Activated B cell treated with CpG ODN at 0.5 μM for 24 hours (primary cell): ENCODE measurements at regions of chr17 and their contacts with region 1.

Region 1: GRCh38 chr17:3802461-3803307 is 1.7 kb upstream of the ITGAE start:
- DNase-seq: no peak
- ATAC-seq: no peak
- H3K4me3 Mint-ChIP-seq: no peak overlapping the region
- H3K27ac Mint-ChIP-seq: peak overlapping the region; percentile 57
- H3K4me1 Mint-ChIP-seq: peaks cover 54% of the 10 kb centered on the region
- H3K27me3 Mint-ChIP-seq: no peaks in the 10 kb centered on the region
- CTCF ChIP-seq: no peak

Region 2: GRCh38 chr17:3773511-3773910 is 29.2 kb before region 1 on chr17:
- CTCF ChIA-PET with region 1: no interaction called
- POLR2A ChIA-PET with region 1: interaction called, 14 read pairs
- intact Hi-C with region 1: no loop called
- DNase-seq: no peak
- ATAC-seq: no peak
- H3K4me3 Mint-ChIP-seq: no peak overlapping the region
- H3K27ac Mint-ChIP-seq: no peak overlapping the region
- H3K4me1 Mint-ChIP-seq: peaks cover 17% of the 10 kb centered on the region
- H3K27me3 Mint-ChIP-seq: no peaks in the 10 kb centered on the region
- CTCF ChIP-seq: no peak

Region 3: DNA sequence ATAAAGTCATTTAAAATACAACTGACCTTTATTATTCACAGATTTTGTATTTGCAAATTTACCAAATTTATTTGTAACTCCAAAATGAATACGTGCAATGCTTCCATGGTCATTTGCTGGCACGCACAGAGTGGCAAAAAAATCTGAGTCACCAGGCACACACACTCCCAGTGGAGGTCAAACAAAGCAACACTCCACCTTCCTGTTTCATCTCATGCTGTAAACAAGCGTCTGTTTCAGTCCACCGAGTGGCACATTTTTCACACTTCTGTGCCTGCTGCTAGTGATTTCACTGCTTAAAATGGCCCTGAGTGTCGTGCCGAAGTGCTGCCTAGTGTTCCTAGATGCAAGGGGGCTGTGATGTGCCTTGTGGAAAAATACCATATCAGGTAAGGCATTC is 16.1 kb after region 1 on chr17:
- CTCF ChIA-PET with region 1: no interaction called
- POLR2A ChIA-PET with region 1: interaction called, 5 read pairs
- intact Hi-C with region 1: loop called (anchors 2 kb)
- DNase-seq: no peak
- ATAC-seq: peak; percentile 65
- H3K4me3 Mint-ChIP-seq: no peak overlapping the region
- H3K27ac Mint-ChIP-seq: peak overlapping the region; percentile 65
- H3K4me1 Mint-ChIP-seq: peaks cover 29% of the 10 kb centered on the region
- H3K27me3 Mint-ChIP-seq: no peaks in the 10 kb centered on the region
- CTCF ChIP-seq: no peak

Region 4: DNA sequence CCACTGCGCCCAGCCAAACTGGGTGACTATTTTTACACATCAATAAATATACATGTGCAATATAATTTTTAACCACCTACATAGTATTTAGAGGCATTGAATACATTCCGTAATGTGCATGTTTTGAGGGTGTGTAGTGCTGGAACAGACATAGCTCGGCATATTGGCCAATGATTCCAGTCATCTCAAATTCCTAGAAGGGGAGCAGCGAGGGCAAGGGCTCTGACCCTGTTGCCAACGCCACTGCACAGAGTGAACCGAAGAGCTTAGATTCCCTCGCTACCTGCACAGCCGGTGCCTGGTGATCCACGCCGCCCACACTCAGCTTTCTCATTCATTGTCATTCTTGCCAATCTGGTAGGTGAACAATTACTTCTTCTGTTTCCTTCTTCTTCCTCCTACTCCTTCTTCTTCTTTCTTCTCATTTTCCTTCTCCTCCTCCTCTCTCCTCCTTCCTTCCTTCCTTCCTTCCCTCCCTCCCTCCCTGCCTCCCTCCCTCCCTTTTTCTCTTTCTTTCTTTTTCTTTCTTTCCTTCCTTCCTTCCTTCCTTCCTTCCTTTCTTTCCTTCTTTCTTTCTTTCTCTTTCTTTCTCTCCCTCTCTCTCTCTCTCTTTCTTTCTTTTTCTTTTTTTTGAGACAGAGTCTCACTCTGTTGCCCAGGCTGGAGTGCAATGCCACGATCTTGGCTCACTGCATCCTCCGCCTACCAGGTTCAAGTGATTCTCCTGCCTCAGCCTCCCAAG is 187.9 kb after region 1 on chr17:
- CTCF ChIA-PET with region 1: no interaction called
- POLR2A ChIA-PET with region 1: no interaction called
- intact Hi-C with region 1: no loop called
- DNase-seq: no peak
- ATAC-seq: no peak
- H3K4me3 Mint-ChIP-seq: no peak overlapping the region
- H3K27ac Mint-ChIP-seq: no peak overlapping the region
- H3K4me1 Mint-ChIP-seq: peaks cover 7% of the 10 kb centered on the region
- H3K27me3 Mint-ChIP-seq: peaks cover 5% of the 10 kb centered on the region
- CTCF ChIP-seq: no peak

Region 5: DNA sequence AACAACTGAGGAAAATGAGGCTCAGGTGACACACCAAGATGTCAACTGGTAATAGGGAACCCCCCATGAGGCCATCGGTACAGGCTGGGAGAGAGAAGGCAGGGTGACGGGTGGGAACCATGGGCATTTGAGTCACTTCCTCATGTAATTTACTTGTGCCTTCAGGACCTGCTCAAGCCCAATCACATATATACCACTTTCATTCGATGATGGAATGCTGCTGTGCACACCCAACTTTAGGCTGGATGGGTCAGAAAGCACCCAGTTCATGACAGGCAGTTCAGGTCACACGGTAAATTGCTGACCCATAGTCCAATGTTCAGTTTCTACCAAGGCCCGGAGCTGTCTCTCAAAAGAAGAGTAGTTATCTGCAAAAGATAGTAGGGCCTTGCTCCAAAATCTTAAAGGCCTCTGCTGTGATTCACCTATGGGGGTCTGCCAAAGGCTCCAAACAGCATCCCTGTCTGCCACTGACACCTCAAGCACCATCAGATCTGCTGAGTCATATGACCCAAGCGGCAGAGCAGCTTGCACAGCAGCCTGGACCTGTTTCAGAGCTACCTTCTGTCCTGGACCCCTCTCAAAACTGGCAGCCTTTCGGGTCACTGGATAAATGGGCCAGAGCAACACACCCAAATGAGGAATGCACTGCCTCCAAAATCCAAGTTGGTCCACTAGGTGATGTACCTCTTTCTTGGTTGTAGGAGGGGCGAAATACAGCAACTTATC is 315.5 kb after region 1 on chr17:
- CTCF ChIA-PET with region 1: no interaction called
- POLR2A ChIA-PET with region 1: no interaction called
- intact Hi-C with region 1: no loop called
- DNase-seq: no peak
- ATAC-seq: no peak
- H3K4me3 Mint-ChIP-seq: no peak overlapping the region
- H3K27ac Mint-ChIP-seq: no peak overlapping the region
- H3K4me1 Mint-ChIP-seq: no peaks in the 10 kb centered on the region
- H3K27me3 Mint-ChIP-seq: no peaks in the 10 kb centered on the region
- CTCF ChIP-seq: no peak